ENCODE measurements at regions of chr10 and their contacts with region 1.

Region 1: DNA sequence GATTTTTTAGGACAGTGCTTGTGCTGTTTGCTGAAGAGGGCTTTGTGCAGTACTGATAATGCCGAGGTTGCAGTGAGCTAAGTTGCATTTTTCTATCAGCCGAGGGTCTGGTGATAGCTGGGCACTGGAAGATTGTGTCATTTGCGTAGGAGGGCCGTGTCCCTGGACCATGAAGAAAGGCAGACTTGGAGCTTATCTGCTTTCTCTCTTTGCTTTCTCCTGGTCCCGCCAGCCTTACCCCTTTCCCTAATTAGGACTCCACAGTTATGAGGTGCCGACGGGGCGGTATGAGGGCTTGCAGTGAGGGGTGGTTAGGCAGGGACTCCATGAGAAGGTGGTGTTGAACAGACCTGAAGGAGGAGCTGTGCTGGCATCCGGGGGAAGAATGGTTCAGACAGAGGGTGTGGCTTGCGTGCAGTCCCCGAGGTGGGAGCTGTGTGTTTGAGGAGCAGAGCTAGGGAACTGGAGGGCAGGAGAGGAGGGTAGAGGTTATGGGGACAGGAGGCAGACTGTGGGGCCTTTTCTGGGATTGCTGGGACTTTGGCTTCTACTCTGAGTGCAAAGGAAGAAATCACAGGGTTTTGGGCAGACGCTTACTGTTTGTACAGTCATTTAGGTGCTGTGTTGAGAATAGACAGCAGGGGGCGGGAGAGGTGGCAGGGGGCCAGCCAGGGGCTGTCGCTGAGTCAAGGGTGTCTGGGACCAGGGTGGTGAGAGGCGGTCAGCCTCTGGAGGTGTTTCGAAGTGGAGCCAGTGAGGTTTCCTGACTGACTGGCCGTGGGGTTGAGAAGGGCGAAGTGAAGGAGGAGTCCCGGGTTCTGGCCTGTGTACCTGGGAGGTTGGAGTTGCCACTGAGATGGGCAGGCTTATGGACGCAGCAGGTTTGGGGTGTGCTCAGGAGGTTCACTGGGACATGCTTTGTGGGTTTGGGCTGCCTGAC is 43.4 kb downstream of the PRF1 start:
- DNase-seq: peak; percentile 75
- H3K4me3 ChIP-seq: no peak overlapping the region
- H3K27ac ChIP-seq: no peak overlapping the region; a peak in 1 of 4 replicates
- H3K4me1 ChIP-seq: peaks cover 0 to 52% of the 10 kb centered on the region in 2 experiments; a peak in 1 of 4 replicates
- H3K27me3 ChIP-seq: no peaks in the 10 kb centered on the region
- CTCF ChIP-seq: peak; percentile 56
- EP300 ChIP-seq: no peak
- RAD21 ChIP-seq: peak; percentile 48

Region 2: GRCh38 chr10:70575874-70576802 is 17.0 kb after region 1 on chr10:
- CTCF ChIA-PET with region 1: interaction called, 7 read pairs
- POLR2A ChIA-PET with region 1: interaction called, 11 read pairs
- DNase-seq: peak; percentile 78
- H3K4me3 ChIP-seq: no peak overlapping the region
- H3K27ac ChIP-seq: peak overlapping the region in 1 of 2 experiments; percentile 84; a peak in 2 of 4 replicates
- H3K4me1 ChIP-seq: peaks cover 0 to 26% of the 10 kb centered on the region in 2 experiments; a peak in 1 of 4 replicates
- H3K27me3 ChIP-seq: no peaks in the 10 kb centered on the region
- CTCF ChIP-seq: no peak
- EP300 ChIP-seq: peak in 1 of 2 experiments; percentile 43; a peak in 1 of 4 replicates
- RAD21 ChIP-seq: peak; percentile 20; the same call in 1 of the 2 replicates

Region 3: GRCh38 chr10:70617798-70618568 is 58.8 kb after region 1 on chr10:
- CTCF ChIA-PET with region 1: no interaction called
- POLR2A ChIA-PET with region 1: no interaction called
- DNase-seq: no peak
- H3K4me3 ChIP-seq: no peak overlapping the region
- H3K27ac ChIP-seq: peak overlapping the region in 1 of 2 experiments; percentile 38; a peak in 1 of 4 replicates
- H3K4me1 ChIP-seq: no peaks in the 10 kb centered on the region
- H3K27me3 ChIP-seq: no peaks in the 10 kb centered on the region; the same call in 1 of the 2 replicates
- CTCF ChIP-seq: no peak
- EP300 ChIP-seq: no peak
- RAD21 ChIP-seq: no peak

Region 4: GRCh38 chr10:70679498-70679897 is 120.4 kb after region 1 on chr10:
- CTCF ChIA-PET with region 1: interaction called, 4 read pairs
- POLR2A ChIA-PET with region 1: interaction called, 11 read pairs
- DNase-seq: peak; percentile 83
- H3K4me3 ChIP-seq: no peak overlapping the region
- H3K27ac ChIP-seq: peak overlapping the region in 1 of 2 experiments; percentile 88; a peak in 2 of 4 replicates
- H3K4me1 ChIP-seq: peaks cover 7 to 78% of the 10 kb centered on the region in 2 experiments; a peak in 2 of 4 replicates
- H3K27me3 ChIP-seq: no peaks in the 10 kb centered on the region
- CTCF ChIP-seq: no peak
- EP300 ChIP-seq: peak; percentile 10 to 39; a peak in 1 of 4 replicates
- RAD21 ChIP-seq: no peak; the same call in 1 of the 2 replicates

Measured in SK-N-SH (cell line).